ENCODE measurements at regions of chr3 and their contacts with region 1.

Region 1: GRCh38 chr3:197532388-197532787 is 23.4 kb downstream of the BDH1 start:
- DNase-seq: no peak
- H3K4me3 ChIP-seq: no peak overlapping the region
- H3K4me3 Mint-ChIP-seq: no peak overlapping the region
- H3K27ac Mint-ChIP-seq: no peak overlapping the region
- H3K4me1 ChIP-seq: no peaks in the 10 kb centered on the region
- H3K4me1 Mint-ChIP-seq: peaks cover 2% of the 10 kb centered on the region
- H3K27me3 ChIP-seq: no peaks in the 10 kb centered on the region
- H3K27me3 Mint-ChIP-seq: no peaks in the 10 kb centered on the region
- CTCF ChIP-seq: no peak

Region 2: GRCh38 chr3:197501879-197502620 is 30.3 kb before region 1 on chr3:
- CTCF ChIA-PET with region 1: no interaction called
- POLR2A ChIA-PET with region 1: no interaction called
- intact Hi-C with region 1: no loop called
- DNase-seq: peak in 1 of 2 experiments; percentile 37
- H3K4me3 ChIP-seq: no peak overlapping the region
- H3K4me3 Mint-ChIP-seq: no peak overlapping the region
- H3K27ac Mint-ChIP-seq: peak overlapping the region; percentile 74
- H3K4me1 ChIP-seq: peaks cover 29% of the 10 kb centered on the region
- H3K4me1 Mint-ChIP-seq: peaks cover 17% of the 10 kb centered on the region
- H3K27me3 ChIP-seq: no peaks in the 10 kb centered on the region
- H3K27me3 Mint-ChIP-seq: no peaks in the 10 kb centered on the region
- CTCF ChIP-seq: peak; percentile 29 to 35

Region 3: DNA sequence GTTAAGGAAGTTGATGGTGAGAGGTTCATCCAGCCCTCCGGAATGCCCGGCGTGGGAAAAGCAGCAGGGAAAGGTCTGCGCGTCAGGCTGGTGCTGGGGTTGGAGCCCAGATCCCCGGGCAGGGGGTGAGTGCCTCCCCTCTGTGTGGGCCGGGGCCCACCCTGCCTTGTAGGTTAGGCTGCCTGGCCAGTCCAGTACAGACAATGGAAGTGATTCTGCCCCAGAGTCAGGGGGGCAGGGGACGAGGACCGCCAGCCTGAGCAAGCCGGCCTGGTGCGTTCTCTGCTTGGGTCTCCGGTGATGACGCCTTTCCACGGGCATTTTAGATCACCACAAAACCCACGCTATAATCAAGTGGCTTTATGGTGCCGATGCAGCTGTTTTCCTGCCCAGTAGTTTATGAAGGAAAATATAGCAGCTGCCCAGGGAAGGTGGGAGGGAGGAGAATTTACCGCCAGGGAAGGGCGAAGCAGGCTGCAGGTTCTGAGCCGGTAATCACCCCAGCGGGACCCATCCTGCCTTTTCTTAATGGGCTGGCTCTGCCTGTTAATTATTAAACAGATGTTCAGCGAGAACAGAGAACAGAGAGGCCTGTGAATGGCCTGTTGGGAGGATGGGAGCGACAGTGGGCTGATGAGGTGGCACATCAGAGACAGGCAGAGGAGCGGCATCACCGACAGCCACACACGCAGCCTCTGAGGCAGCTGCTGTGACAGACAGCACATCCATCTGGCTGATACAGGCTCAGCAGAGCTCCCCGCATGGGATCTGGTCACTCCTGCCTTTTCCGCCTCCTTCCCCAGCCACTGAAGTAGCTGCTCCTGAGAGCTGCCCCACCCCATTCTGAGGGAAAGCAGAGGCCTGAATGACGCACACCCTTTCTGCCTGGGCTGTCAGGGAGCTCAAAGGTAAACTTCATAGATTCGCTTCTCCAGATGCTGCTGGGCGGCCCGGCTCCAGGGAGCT is 11.8 kb before region 1 on chr3:
- CTCF ChIA-PET with region 1: no interaction called
- POLR2A ChIA-PET with region 1: no interaction called
- intact Hi-C with region 1: loop called (anchors 1 kb)
- DNase-seq: peak; percentile 84 to 89
- H3K4me3 ChIP-seq: peak overlapping the region; percentile 17
- H3K4me3 Mint-ChIP-seq: peak overlapping the region; percentile 75
- H3K27ac Mint-ChIP-seq: peak overlapping the region; percentile 96
- H3K4me1 ChIP-seq: peaks cover 43% of the 10 kb centered on the region
- H3K4me1 Mint-ChIP-seq: peaks cover 39% of the 10 kb centered on the region
- H3K27me3 ChIP-seq: no peaks in the 10 kb centered on the region
- H3K27me3 Mint-ChIP-seq: no peaks in the 10 kb centered on the region
- CTCF ChIP-seq: no peak

Region 4: GRCh38 chr3:197847866-197848401 is 315.5 kb after region 1 on chr3:
- CTCF ChIA-PET with region 1: no interaction called
- POLR2A ChIA-PET with region 1: no interaction called
- intact Hi-C with region 1: no loop called
- DNase-seq: no peak
- H3K4me3 ChIP-seq: no peak overlapping the region
- H3K4me3 Mint-ChIP-seq: no peak overlapping the region
- H3K27ac Mint-ChIP-seq: no peak overlapping the region
- H3K4me1 ChIP-seq: no peaks in the 10 kb centered on the region
- H3K4me1 Mint-ChIP-seq: no peaks in the 10 kb centered on the region
- H3K27me3 ChIP-seq: no peaks in the 10 kb centered on the region
- H3K27me3 Mint-ChIP-seq: no peaks in the 10 kb centered on the region
- CTCF ChIP-seq: no peak